ENCODE measurements at regions of chr6 and their contacts with region 1.

Region 1: GRCh38 chr6:71091173-71091572 is 134.3 kb upstream of the B3GAT2 start:
- DNase-seq: no peak
- H3K4me3 ChIP-seq: no peak overlapping the region
- H3K27ac ChIP-seq: no peak overlapping the region
- H3K4me1 ChIP-seq: no peaks in the 10 kb centered on the region
- H3K27me3 ChIP-seq: no peaks in the 10 kb centered on the region
- CTCF ChIP-seq: no peak

Region 2: GRCh38 chr6:71139249-71139648 is 48.1 kb after region 1 on chr6:
- CTCF ChIA-PET with region 1: no interaction called
- POLR2A ChIA-PET with region 1: interaction called, 38 read pairs
- intact Hi-C with region 1: no loop called
- DNase-seq: peak in 1 of 2 experiments; percentile 59
- H3K4me3 ChIP-seq: no peak overlapping the region
- H3K27ac ChIP-seq: no peak overlapping the region
- H3K4me1 ChIP-seq: no peaks in the 10 kb centered on the region
- H3K27me3 ChIP-seq: no peaks in the 10 kb centered on the region
- CTCF ChIP-seq: no peak

Region 3: GRCh38 chr6:71153755-71154325 is 62.7 kb after region 1 on chr6:
- CTCF ChIA-PET with region 1: no interaction called
- POLR2A ChIA-PET with region 1: no interaction called
- intact Hi-C with region 1: no loop called
- DNase-seq: no peak
- H3K4me3 ChIP-seq: no peak overlapping the region
- H3K27ac ChIP-seq: no peak overlapping the region
- H3K4me1 ChIP-seq: no peaks in the 10 kb centered on the region
- H3K27me3 ChIP-seq: no peaks in the 10 kb centered on the region
- CTCF ChIP-seq: no peak

Region 4: DNA sequence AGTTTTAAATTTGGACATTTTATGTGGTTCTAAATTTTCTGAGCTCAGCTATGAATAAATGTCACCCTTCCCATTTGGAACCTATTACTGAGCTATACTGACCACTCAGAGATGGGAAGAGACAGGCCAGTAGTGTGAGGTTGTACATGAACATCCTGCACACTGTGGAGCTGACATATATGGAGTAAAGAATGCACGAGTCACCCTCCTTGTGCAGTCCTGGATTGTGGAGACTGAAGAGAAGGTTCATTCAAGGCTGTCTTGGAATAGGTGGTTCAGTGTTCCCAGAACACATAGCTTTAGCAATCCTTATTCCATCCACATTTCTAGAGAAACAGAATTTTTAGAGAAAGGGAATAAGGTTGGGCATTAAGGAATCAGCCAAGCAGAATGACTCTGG is 147.2 kb after region 1 on chr6:
- CTCF ChIA-PET with region 1: no interaction called
- POLR2A ChIA-PET with region 1: no interaction called
- intact Hi-C with region 1: no loop called
- DNase-seq: no peak
- H3K4me3 ChIP-seq: no peak overlapping the region
- H3K27ac ChIP-seq: no peak overlapping the region
- H3K4me1 ChIP-seq: no peaks in the 10 kb centered on the region
- H3K27me3 ChIP-seq: no peaks in the 10 kb centered on the region
- CTCF ChIP-seq: no peak

Measured in PC-9 (cell line).